H1 (cell line): ENCODE measurements at regions of chr17 and their contacts with region 1.

Region 1: DNA sequence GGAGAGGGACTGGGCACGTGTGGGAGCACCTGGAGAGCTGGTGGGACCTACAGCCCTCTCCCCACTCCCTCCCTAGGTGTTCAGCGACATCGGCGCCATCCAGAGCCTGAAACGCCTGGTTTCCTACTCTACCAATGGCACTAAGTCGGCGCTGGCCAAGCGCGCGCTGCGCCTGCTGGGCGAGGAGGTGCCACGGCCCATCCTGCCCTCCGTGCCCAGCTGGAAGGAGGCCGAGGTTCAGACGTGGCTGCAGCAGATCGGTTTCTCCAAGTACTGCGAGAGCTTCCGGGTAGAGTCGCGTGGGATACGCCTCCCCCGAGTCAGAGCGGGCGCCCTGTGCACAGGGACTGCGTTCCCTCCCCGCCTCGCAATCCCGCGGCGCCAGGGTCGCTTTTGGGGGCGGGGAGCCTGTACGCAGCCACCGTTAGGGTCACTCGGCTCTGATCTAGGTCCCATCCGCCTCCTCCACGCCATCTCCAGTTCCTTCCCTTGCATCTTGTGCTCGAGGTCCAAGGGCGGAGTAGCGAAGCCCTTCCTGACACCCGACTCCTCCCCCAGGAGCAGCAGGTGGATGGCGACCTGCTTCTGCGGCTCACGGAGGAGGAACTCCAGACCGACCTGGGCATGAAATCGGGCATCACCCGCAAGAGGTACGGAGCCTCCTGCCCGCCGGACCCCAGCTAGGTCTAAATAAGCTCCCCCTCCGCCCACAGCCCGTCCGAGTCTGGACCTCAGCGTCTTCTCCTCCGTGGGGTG is 13.0 kb downstream of the SARM1 start:
- DNase-seq: peak in 1 of 2 experiments; percentile 77
- H3K4me3 ChIP-seq: peak overlapping the region; percentile 32 to 77 (median 62)
- H3K27ac ChIP-seq: no peak overlapping the region
- H3K4me1 ChIP-seq: peaks cover 0 to 13% (median 6%) of the 10 kb centered on the region in 4 experiments; a peak in 4 of 7 replicates
- H3K27me3 ChIP-seq: peaks cover 38 to 67% (median 57%) of the 10 kb centered on the region in 4 experiments
- CTCF ChIP-seq: no peak
- EP300 ChIP-seq: no peak
- POLR2A ChIP-seq: 0 out of 3 replicates have a peak, but pooled peaks of 1 of the 2 experiments have one; percentile 37
- RAD21 ChIP-seq: no peak

Region 2: DNA sequence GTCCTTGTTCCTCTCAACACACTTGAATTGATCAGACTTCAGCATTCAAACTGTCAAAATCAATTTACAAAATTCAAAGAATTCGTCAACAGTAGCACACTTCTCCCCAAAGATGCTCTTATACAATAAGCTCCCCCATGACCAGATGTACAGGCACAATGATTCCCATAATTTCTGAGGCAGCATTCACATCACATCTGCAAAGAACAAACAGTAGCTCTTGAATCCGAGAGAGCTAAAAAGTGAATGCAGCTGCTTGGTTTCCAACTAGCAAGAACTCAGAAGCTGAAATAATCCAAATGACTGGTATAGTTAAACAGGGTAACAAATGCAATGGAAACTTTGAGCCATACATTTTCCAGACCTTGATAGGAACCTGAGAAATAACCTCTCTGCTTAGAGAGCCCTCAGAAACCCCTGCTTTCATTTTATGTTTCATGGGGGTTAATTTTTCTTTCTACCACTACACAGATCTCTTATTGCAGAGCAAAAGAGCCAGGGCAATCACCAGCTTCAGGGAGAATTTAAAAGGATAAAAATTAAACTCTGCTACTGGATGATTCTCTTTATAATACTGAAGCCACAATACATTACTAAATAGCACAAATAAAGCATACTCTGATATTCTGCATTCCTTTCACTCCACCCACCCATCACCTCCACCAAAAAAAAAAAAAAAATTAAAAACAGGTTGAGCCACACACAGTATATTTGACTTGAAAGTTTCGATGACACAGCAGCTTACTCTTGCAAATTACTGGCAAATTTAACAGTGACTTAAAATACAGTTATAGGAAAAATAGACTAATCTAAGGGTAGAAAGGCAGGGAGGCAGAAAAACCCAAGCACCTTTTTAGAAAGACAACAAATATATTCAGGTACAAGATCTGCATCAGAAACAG is 88.5 kb before region 1 on chr17:
- CTCF ChIA-PET with region 1: no interaction called
- POLR2A ChIA-PET with region 1: no interaction called
- DNase-seq: no peak
- H3K4me3 ChIP-seq: no peak overlapping the region
- H3K27ac ChIP-seq: no peak overlapping the region
- H3K4me1 ChIP-seq: no peaks in the 10 kb centered on the region
- H3K27me3 ChIP-seq: no peaks in the 10 kb centered on the region
- CTCF ChIP-seq: no peak
- EP300 ChIP-seq: no peak
- POLR2A ChIP-seq: no peak
- RAD21 ChIP-seq: no peak

Region 3: DNA sequence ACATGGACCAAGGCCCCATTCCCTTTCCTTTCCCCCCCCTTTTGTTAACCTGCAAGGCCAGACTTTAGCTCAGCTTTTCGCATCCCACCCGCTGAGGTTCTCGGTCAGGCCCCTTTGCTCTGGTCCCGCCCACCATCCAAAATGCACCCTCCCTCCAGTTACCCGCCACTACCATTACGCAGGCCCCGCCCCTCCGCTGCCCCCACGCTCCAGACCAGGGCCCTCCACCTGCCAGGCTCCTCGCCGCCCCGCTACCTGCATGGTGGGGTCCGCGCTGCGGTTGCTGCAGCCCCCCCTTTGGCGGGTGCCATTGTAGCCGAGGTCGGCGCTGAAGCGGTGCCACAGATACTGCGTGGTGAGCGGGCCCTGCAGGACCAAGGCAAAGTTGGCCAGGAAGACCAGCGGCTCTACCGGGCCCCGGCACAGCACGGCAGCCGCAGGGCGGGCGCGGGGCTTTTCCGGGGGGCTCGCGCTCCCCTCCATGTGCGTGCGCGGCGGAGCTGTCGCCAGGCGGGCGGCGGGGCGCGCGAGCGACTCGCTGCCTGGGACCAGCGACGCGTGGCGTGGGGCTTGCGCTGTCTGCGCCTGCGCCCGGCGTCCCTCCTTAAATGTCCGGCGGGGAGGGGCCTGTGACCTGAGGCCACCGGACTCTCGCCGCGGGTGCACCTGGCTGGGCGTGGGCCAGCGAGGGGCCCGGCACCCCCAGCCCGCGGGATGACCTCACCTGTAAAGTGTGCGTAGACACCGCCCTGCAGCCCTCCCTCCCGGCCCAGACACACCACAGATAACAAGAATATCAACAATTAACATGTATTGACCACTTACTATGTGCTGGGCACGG is 21.4 kb after region 1 on chr17 and contains the start of gene SLC46A1:
- CTCF ChIA-PET with region 1: interaction called, 9 read pairs
- POLR2A ChIA-PET with region 1: interaction called, 135 read pairs
- DNase-seq: peak in 1 of 2 experiments; percentile 87
- H3K4me3 ChIP-seq: peak within 1 kb of the TSS; percentile 51 to 74 (median 60)
- H3K27ac ChIP-seq: no peak within 1 kb of the TSS; the same call in 1 of the 2 replicates
- H3K4me1 ChIP-seq: peaks cover 32 to 64% (median 40%) of the 10 kb centered on the region in 4 experiments
- H3K27me3 ChIP-seq: peaks cover 0 to 35% (median 15%) of the 10 kb centered on the region in 4 experiments; a peak in 5 of 7 replicates
- CTCF ChIP-seq: no peak
- EP300 ChIP-seq: no peak
- POLR2A ChIP-seq: no peak
- RAD21 ChIP-seq: no peak
- total RNA-seq, gene SLC46A1: 7.1 and 8.7 TPM in 2 replicates

Region 4: GRCh38 chr17:28473542-28473941 is 89.1 kb after region 1 on chr17 and contains the start of gene SLC13A2:
- CTCF ChIA-PET with region 1: no interaction called
- POLR2A ChIA-PET with region 1: no interaction called
- DNase-seq: no peak
- H3K4me3 ChIP-seq: no peak within 1 kb of the TSS
- H3K27ac ChIP-seq: no peak within 1 kb of the TSS
- H3K4me1 ChIP-seq: no peaks in the 10 kb centered on the region
- H3K27me3 ChIP-seq: no peaks in the 10 kb centered on the region; a peak in 2 of 7 replicates
- CTCF ChIP-seq: no peak
- EP300 ChIP-seq: no peak
- POLR2A ChIP-seq: no peak
- RAD21 ChIP-seq: no peak
- total RNA-seq, gene SLC13A2: not detected in 2 replicates